ENCODE measurements at regions of chr6 and their contacts with region 1.

Region 1: GRCh38 chr6:5143634-5144311 is 58.6 kb downstream of the PPP1R3G start:
- DNase-seq: peak; percentile 78 to 90 (median 84)
- H3K4me3 ChIP-seq: no peak overlapping the region
- H3K27ac ChIP-seq: no peak overlapping the region
- H3K4me1 ChIP-seq: peaks cover 7 to 20% (median 15%) of the 10 kb centered on the region in 4 experiments
- H3K27me3 ChIP-seq: no peaks in the 10 kb centered on the region

Region 2: DNA sequence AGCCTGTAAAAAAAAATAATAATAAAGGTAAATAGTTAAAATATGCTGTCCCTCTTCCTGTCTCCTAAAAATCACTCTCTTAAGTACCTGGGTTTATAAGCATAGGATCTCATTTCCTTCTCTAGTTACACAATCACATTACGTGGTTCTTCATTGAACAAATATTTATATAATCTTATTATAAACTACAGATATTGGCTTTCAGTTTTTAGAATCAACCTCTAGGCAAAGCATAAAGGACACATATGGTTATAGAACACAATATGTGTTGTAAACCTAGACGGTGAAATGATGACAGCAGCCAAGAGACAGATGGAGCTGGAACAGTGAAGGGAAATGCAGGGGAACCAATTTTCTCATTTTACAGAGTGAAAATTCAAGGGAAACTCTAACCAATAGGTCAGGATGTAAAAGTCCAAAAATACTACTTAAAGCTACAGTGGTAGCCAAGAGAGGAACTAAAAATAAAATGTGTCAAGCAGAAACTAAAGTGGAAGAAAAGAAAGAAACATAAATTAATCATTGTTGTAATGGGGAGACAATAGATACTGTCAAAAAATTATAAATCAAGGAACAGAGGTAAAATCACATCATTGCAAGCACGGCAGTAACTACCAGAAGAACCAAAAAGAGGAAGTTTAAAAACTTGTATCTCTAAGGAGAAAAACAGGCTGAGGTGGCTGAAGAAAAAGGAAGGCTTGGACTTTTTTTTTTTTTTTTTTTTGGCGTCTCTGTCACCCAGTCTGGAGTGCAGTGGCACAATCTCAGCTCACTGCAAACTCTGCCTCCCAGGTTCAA is 450.4 kb before region 1 on chr6:
- CTCF ChIA-PET with region 1: no interaction called
- POLR2A ChIA-PET with region 1: no interaction called
- DNase-seq: peak; percentile 12 to 69 (median 54)
- H3K4me3 ChIP-seq: no peak overlapping the region
- H3K27ac ChIP-seq: no peak overlapping the region
- H3K4me1 ChIP-seq: peaks cover 0 to 3% (median 1%) of the 10 kb centered on the region in 4 experiments
- H3K27me3 ChIP-seq: no peaks in the 10 kb centered on the region

Region 3: GRCh38 chr6:5050009-5050408 is 93.8 kb before region 1 on chr6:
- CTCF ChIA-PET with region 1: no interaction called
- POLR2A ChIA-PET with region 1: no interaction called
- DNase-seq: no peak
- H3K4me3 ChIP-seq: peak overlapping the region in 1 of 7 experiments; percentile 26
- H3K27ac ChIP-seq: no peak overlapping the region
- H3K4me1 ChIP-seq: peaks cover 2 to 21% (median 18%) of the 10 kb centered on the region in 4 experiments
- H3K27me3 ChIP-seq: no peaks in the 10 kb centered on the region

Region 4: DNA sequence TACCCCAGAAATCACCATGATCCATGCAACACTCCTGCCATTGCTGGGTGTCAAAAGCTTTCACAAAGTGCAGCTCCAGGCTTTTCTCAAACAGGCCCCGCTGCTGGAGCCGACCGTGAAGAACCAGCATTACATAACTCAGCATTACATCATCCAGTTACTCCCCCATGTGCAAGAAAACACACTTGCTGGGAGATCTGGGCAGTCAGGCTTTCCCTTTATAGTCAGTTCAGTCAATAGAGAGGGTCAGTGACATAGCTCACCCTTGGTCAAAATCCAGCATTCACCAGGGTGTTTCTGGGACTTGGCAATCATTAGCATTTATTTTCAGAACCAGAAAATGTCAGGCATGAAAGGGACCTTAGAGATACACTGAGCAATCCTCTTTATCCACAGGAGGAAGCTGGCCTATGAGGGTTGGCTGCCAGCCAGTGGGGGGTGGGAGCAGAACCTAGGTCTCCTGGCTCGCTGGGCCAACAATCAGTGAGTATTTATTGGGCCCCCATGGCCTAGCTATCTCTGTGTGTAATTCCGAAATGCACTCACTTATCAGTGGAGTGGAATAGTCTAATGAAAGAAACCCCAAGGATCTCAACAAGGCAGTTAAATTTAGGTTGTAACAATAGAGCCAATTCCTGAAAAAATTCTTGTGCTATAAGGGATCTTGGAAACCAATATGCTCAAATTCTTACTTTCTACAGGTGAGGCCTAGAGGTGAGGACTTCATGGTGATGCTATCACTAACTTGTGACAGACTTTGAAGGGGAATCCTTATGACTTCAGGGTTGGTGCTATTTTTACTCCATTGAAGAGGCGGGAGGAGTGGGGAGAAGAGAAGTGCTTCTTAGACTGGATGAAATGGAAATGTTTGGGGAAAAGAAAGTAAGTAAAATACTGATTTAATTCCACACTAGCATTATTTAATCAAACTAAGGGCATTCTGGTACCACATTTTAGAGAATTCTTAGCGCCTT is 62.4 kb after region 1 on chr6:
- CTCF ChIA-PET with region 1: interaction called, 14 read pairs
- POLR2A ChIA-PET with region 1: no interaction called
- DNase-seq: peak; percentile 15 to 55 (median 48)
- H3K4me3 ChIP-seq: no peak overlapping the region
- H3K27ac ChIP-seq: no peak overlapping the region
- H3K4me1 ChIP-seq: peaks cover 0 to 20% (median 8%) of the 10 kb centered on the region in 4 experiments
- H3K27me3 ChIP-seq: no peaks in the 10 kb centered on the region

Region 5: GRCh38 chr6:5275497-5275896 is 131.7 kb after region 1 on chr6:
- CTCF ChIA-PET with region 1: interaction called, 10 read pairs
- POLR2A ChIA-PET with region 1: no interaction called
- DNase-seq: no peak
- H3K4me3 ChIP-seq: no peak overlapping the region
- H3K27ac ChIP-seq: no peak overlapping the region
- H3K4me1 ChIP-seq: peaks cover 0 to 12% (median 9%) of the 10 kb centered on the region in 4 experiments
- H3K27me3 ChIP-seq: no peaks in the 10 kb centered on the region

Region 6: DNA sequence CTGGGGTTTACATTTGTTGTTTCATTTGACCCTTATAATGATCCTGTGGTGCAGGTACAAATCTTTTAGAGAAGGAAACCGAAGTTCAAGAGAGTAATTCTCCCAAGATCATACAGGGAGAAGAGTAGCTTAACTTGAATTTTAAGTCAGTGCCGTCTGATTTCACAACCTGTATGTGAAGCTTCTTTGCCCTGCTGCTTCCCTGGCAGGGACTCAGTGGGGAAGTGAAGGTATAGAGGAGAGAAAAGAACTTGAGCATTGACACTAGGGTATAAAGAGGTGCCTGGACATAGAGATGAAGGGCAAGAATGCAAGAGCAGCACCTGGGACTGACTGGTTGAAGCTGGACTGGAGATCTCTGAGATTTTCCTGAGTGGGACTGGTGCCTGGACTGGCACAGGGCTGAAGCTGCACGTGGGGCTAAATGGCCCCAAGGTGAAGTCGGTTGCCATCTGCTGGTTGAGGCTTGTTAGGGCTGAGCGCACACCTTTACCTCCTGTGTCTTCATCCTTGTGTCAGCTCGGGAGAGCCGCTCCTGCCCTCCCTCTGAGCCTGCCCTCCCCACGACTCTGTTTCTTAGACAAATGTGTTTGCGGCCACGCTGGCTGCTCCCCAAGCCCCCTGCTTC is 159.3 kb after region 1 on chr6:
- CTCF ChIA-PET with region 1: interaction called, 13 read pairs
- POLR2A ChIA-PET with region 1: no interaction called
- DNase-seq: peak; percentile 31 to 63 (median 60)
- H3K4me3 ChIP-seq: peak overlapping the region in 1 of 7 experiments; percentile 3
- H3K27ac ChIP-seq: no peak overlapping the region
- H3K4me1 ChIP-seq: peaks cover 0 to 8% (median 2%) of the 10 kb centered on the region in 4 experiments
- H3K27me3 ChIP-seq: no peaks in the 10 kb centered on the region

Region 7: GRCh38 chr6:5379647-5380242 is 236.0 kb after region 1 on chr6:
- CTCF ChIA-PET with region 1: interaction called, 10 read pairs
- POLR2A ChIA-PET with region 1: no interaction called
- DNase-seq: peak; percentile 14 to 49 (median 48)
- H3K4me3 ChIP-seq: no peak overlapping the region
- H3K27ac ChIP-seq: no peak overlapping the region
- H3K4me1 ChIP-seq: no peaks in the 10 kb centered on the region
- H3K27me3 ChIP-seq: no peaks in the 10 kb centered on the region